ENCODE measurements at regions of chr6 and their contacts with region 1.

Region 1: GRCh38 chr6:110534731-110535492 is 58.5 kb upstream of the SLC22A16 start:
- DNase-seq: no peak
- ATAC-seq: no peak
- H3K4me3 ChIP-seq: no peak overlapping the region
- H3K27ac ChIP-seq: no peak overlapping the region
- H3K4me1 ChIP-seq: no peaks in the 10 kb centered on the region
- H3K27me3 ChIP-seq: no peaks in the 10 kb centered on the region
- CTCF ChIP-seq: no peak
- POLR2A ChIP-seq: no peak

Region 2: DNA sequence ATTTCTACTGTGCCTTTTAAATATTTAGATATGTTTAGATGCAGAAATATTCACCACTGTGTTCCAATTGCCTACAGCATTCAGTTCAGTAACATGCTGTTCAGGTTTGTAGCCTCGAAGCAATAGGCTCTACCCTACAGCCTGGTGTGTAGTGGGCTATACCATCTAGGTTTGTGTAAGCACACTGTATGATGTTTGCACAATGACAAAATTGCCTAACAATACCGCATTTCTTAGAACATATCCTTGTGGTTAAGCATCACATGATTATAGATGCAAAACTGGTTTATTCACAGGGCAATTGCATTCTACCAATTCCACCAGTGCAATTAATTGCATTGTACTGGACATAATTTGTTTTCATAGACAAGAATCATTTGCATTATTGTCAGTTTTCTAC is 50.6 kb before region 1 on chr6:
- in situ Hi-C with region 1: no loop called
- intact Hi-C with region 1: no loop called
- DNase-seq: no peak
- ATAC-seq: no peak
- H3K4me3 ChIP-seq: no peak overlapping the region
- H3K27ac ChIP-seq: no peak overlapping the region
- H3K4me1 ChIP-seq: no peaks in the 10 kb centered on the region
- H3K27me3 ChIP-seq: no peaks in the 10 kb centered on the region
- CTCF ChIP-seq: no peak
- POLR2A ChIP-seq: no peak

Region 3: GRCh38 chr6:110746680-110747079 is 211.8 kb after region 1 on chr6:
- in situ Hi-C with region 1: no loop called
- intact Hi-C with region 1: no loop called
- DNase-seq: no peak
- ATAC-seq: no peak
- H3K4me3 ChIP-seq: no peak overlapping the region
- H3K27ac ChIP-seq: no peak overlapping the region
- H3K4me1 ChIP-seq: no peaks in the 10 kb centered on the region
- H3K27me3 ChIP-seq: no peaks in the 10 kb centered on the region
- CTCF ChIP-seq: no peak
- POLR2A ChIP-seq: no peak

Region 4: DNA sequence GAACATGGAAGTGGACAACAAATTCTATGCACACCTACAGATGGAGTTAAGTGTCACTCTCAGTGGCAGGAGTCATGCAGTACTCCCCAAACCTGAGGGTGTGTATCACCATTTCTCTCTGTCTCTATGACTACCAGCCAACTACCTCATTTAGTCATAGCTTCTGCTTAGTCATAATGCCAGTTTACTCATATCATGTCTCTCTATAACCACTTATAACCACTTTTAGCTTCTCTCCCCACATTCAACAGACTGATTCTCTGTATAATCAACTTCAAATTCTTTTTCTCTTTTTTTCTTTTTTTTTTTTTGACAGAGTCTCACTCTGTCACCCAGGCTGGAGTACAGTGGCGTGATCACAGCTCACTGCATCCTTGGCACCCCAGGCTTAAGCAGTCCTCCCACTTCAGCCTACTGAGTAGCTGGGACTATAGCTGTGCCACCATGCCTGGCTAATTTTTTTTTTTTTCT is 409.8 kb after region 1 on chr6:
- in situ Hi-C with region 1: loop called in 2 of 4 experiments (anchors 5 to 25 kb)
- intact Hi-C with region 1: no loop called
- DNase-seq: no peak
- ATAC-seq: no peak
- H3K4me3 ChIP-seq: no peak overlapping the region
- H3K27ac ChIP-seq: no peak overlapping the region
- H3K4me1 ChIP-seq: no peaks in the 10 kb centered on the region
- H3K27me3 ChIP-seq: no peaks in the 10 kb centered on the region
- CTCF ChIP-seq: no peak
- POLR2A ChIP-seq: no peak

Measured in gastrocnemius medialis (tissue), 4 donors.